A549 (cell line): ENCODE measurements at regions of chr12 and their contacts with region 1.

Region 1: DNA sequence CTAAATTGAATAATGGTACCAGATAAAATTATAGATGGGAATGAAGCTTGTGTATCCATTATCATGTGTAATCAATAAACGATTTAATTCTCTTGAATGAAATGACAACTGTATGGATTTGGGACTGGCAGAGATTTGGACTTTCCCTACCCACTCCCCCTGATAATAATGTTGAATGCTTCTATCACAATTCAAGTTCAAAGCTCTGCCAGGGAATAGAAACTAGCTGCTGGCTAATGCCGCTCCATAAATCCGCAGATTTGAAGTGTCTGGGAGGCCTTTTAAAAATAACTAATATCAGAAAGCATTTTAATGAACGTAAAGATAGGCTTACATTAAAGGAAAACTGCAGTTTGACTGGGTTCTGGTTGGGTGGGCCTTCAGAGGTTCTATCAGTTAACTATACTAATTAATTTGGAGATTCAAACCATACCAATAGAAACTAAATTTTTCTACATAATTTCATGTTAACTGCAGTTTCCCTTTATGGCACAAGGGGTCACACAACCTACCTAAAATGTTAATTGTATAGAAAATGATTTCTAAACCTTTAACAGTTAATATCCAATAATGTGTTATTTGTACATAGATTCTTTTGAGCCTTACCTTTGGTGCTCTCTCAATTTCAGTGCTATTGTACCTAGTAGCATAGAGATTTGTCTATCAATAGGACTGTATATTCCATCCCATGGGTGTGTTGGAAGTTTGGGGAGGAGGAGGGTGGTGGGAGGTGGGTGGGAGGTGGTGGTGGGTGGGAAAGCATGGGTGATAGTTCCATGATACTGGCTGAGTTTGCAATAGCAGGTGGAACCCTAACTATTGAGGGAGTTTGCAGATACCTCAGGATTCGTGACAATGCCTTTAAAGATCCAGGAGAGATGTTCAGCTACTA is 4.9 kb downstream of the HNRNPA1 start:
- DNase-seq: no peak
- ATAC-seq: no peak
- H3K4me3 ChIP-seq: peak overlapping the region; percentile 33
- H3K27ac ChIP-seq: no peak overlapping the region
- H3K4me1 ChIP-seq: peaks cover 39% of the 10 kb centered on the region
- CTCF ChIP-seq: peak; percentile 27
- EP300 ChIP-seq: no peak
- POLR2A ChIP-seq: no peak
- RAD21 ChIP-seq: no peak

Region 2: DNA sequence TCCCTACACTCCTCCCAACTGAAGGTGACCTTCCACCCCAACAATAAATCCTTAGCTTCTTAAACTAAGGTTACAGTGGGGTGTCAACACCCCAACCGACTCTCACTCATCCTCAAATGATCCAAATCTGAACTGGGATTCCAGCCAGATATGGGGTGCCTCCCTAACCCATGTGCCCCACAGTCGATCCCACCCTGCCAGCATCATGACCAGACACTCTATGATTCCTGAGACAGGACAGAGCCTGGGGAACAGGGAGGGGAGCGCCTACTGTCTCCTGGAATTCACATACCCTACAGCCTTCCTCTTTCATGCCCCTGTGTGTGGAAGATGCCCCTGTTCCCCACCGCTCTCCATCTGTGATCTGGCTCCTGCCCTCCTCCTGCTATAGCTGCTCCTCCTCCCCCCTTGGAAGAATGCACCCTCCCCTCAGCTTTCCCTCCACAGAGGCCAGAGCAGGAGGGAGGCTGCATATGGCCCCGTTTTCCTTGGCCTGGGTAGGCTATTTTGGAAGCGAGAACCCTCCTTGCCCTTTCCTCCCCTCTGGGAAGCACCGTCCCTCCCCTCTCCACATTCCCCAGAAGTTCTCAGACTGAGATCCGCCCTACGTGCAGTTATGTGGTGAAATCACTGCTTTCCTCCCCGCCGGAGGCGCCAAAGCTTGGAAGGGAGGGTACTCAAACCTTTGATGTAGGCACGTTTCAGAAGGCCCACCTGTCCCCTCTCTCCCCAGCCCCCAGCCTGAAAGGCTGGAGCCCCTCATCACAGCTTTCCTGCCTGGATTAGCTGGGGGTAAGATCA is 144.6 kb before region 1 on chr12:
- CTCF ChIA-PET with region 1: no interaction called
- POLR2A ChIA-PET with region 1: no interaction called
- DNase-seq: no peak
- ATAC-seq: no peak
- H3K4me3 ChIP-seq: no peak overlapping the region
- H3K27ac ChIP-seq: no peak overlapping the region
- H3K4me1 ChIP-seq: no peaks in the 10 kb centered on the region
- CTCF ChIP-seq: no peak
- EP300 ChIP-seq: no peak
- POLR2A ChIP-seq: no peak
- RAD21 ChIP-seq: no peak

Region 3: GRCh38 chr12:54300732-54301427 is 15.5 kb after region 1 on chr12 and contains the start of gene NFE2:
- CTCF ChIA-PET with region 1: interaction called, 30 read pairs
- POLR2A ChIA-PET with region 1: interaction called, 9 read pairs
- DNase-seq: peak; percentile 63 to 66
- ATAC-seq: peak; percentile 86 to 92
- H3K4me3 ChIP-seq: peak within 1 kb of the TSS; percentile 29
- H3K27ac ChIP-seq: peak within 1 kb of the TSS; percentile 34 to 81; a peak in 5 of 6 replicates
- H3K4me1 ChIP-seq: peaks cover 32% of the 10 kb centered on the region
- CTCF ChIP-seq: no peak
- EP300 ChIP-seq: no peak
- POLR2A ChIP-seq: no peak
- RAD21 ChIP-seq: no peak
- polyA plus RNA-seq, gene NFE2: 0.52 and 0.90 TPM in 2 replicates